ENCODE measurements at regions of chr20 and their contacts with region 1.

Region 1: GRCh38 chr20:53623454-53624211 is 30.0 kb upstream of the ZNF217 start:
- DNase-seq: peak; percentile 80
- H3K4me3 Mint-ChIP-seq: peak overlapping the region; percentile 57
- H3K27ac Mint-ChIP-seq: peak overlapping the region; percentile 98
- H3K4me1 Mint-ChIP-seq: peaks cover 18% of the 10 kb centered on the region
- H3K27me3 Mint-ChIP-seq: no peaks in the 10 kb centered on the region
- CTCF ChIP-seq: no peak

Region 2: DNA sequence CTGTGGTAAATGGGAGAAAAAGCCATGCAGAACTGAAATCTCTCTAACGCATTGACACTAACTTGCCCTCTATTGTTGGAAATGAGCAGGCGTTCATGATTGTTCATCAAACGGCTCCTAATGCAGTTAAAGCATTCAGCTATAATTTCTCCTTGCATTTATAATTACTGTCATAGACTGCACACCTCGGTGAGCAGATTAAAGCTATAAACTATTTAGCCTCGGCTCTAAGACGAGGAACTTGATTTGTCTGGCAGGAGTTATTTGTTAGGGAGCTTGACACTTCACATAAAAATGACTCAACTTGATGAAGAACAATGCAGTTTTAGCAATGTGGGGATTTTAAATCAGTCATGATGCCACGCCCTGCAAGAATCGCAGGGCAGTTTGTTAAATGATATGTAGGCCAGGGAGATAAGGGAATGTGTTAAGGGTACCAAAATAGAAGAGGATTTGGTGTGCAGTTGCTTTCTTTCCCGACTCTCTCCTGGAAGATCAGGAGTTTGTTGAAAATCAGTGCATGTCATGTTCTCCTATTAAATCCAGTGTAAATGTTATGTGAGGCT is 361.3 kb before region 1 on chr20:
- CTCF ChIA-PET with region 1: no interaction called
- POLR2A ChIA-PET with region 1: no interaction called
- intact Hi-C with region 1: no loop called
- DNase-seq: no peak
- H3K4me3 Mint-ChIP-seq: no peak overlapping the region
- H3K27ac Mint-ChIP-seq: no peak overlapping the region
- H3K4me1 Mint-ChIP-seq: no peaks in the 10 kb centered on the region
- H3K27me3 Mint-ChIP-seq: no peaks in the 10 kb centered on the region
- CTCF ChIP-seq: no peak

Region 3: GRCh38 chr20:53594068-53595017 is 29.3 kb before region 1 on chr20:
- CTCF ChIA-PET with region 1: interaction called, 5 read pairs
- POLR2A ChIA-PET with region 1: interaction called, 350 read pairs
- intact Hi-C with region 1: loop called (anchors 1 kb)
- DNase-seq: peak; percentile 90
- H3K4me3 Mint-ChIP-seq: peak overlapping the region; percentile 82
- H3K27ac Mint-ChIP-seq: peak overlapping the region; percentile 93
- H3K4me1 Mint-ChIP-seq: peaks cover 29% of the 10 kb centered on the region
- H3K27me3 Mint-ChIP-seq: no peaks in the 10 kb centered on the region
- CTCF ChIP-seq: peak; percentile 23

Region 4: DNA sequence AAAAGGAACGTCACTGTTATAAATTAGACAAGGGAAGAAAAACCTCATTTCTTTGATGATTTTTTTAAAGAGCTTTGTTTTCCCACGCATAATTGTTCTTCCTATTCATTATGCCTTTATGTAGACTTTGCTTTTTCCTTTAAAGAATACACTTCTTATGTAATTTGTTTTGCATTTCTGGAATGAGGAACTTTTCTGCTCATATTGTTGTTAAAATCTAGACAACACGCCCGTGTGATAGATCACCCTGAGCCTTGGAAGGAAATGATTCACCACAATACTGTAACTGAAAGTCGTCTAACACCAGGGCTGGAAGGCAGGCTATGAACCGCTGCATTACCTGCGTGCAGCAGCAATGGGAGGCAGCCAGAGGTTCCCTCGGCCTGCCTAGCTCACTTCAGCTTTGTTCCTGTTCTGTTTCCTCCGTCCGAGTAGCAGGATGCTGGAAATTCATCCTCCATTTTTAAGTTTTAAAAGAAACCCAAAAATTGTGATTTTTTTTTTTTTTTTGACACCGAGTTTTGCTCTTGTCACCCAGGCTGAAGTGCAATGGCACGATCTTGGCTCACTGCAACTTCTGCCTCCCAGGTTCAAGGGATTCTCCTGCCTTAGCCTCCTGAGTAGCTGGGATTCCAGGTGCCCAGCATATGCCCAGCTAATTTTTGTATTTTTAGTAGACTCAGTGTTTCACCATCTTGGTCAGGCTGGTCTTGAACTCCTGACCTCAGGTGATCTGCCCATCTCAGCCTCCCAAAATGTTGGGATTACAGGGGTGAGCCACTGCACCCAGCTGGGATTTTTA is 19.6 kb after region 1 on chr20:
- CTCF ChIA-PET with region 1: interaction called, 13 read pairs
- POLR2A ChIA-PET with region 1: interaction called, 78 read pairs
- intact Hi-C with region 1: no loop called
- DNase-seq: peak; percentile 79
- H3K4me3 Mint-ChIP-seq: peak overlapping the region; percentile 51
- H3K27ac Mint-ChIP-seq: peak overlapping the region; percentile 97
- H3K4me1 Mint-ChIP-seq: peaks cover 12% of the 10 kb centered on the region
- H3K27me3 Mint-ChIP-seq: no peaks in the 10 kb centered on the region
- CTCF ChIP-seq: no peak

Region 5: DNA sequence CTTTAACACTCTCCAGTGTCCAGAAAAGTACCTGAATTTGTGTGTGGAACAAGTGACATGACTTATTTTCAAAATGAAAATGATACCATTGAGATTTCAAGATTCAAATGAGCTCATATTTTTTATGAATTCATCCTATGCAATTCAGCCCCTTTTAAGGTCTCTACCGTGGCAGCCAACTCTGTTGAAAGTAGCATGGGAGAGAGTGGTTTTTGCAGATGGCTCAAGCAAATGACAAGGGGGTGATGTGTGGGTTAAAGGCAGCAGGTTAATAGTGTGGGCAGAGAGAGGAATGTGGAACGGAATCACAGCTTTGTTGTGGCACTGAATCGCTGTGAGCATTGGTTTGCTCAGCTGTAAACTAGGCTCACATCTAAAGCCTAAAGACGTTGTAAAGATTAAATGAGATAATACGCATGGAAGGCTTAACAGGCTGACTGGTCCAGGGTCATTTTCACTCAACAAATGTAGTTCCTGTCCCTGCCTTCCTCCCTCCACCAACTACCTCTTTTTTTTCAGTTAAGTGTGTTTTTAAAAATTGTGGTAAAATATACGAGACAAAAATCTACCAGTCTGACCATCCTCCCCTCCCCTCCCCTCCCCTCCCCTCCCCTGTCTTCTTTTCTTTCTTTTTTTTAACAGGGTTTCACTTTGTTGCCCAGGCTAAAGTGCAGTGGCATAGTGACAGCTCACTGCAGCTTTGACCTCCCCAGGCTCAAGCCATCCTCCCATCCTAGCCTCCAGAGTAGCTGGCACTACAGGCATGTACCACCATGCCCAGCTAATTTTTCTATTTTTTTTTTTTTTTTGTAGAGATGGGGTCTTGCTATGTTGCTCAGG is 84.7 kb after region 1 on chr20:
- CTCF ChIA-PET with region 1: no interaction called
- POLR2A ChIA-PET with region 1: no interaction called
- intact Hi-C with region 1: no loop called
- DNase-seq: no peak
- H3K4me3 Mint-ChIP-seq: no peak overlapping the region
- H3K27ac Mint-ChIP-seq: no peak overlapping the region
- H3K4me1 Mint-ChIP-seq: no peaks in the 10 kb centered on the region
- H3K27me3 Mint-ChIP-seq: no peaks in the 10 kb centered on the region
- CTCF ChIP-seq: no peak

Region 6: DNA sequence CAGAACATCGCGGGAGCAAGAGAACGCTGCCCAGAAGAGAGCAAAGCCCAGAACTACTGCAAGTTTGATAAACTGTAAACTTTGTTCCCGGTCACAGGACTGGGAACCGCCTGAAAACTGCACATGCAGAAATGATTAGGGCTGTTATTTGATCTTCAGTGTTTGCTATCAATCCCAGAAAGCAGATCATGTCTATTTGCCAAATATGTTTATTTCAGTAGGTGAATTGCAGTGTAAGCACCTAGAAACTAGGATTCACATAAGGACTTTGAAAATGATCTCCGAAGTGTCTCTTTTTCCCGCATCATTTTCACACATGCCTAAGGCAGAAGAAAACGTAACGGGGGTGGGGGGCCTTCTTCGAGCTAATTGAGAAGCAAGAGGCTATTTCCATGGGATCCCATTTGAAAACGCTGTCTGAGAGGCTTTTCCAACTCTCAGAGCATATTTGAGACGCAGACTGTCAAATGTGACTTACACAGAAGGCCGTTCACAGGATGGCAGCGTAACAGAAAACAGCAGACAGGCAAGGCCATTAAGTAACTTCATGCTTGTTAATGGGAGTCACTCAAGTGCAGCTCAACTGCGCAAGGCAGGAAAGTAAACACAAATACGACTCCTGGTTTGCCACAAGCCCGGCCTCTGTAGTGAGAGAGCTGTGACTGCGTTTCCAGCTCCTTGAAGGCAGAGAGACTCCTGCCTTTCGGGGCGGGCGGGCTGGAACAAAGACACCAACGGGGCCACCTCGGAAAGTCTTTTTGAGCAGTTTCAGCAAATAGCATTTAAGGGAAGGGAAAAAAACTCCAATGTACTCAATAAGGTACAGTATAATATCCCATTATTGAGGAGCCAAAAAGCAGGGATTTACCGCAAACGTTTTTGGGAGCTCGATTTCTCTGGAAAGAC is 114.7 kb after region 1 on chr20:
- CTCF ChIA-PET with region 1: interaction called, 4 read pairs
- POLR2A ChIA-PET with region 1: interaction called, 30 read pairs
- intact Hi-C with region 1: no loop called
- DNase-seq: no peak
- H3K4me3 Mint-ChIP-seq: no peak overlapping the region
- H3K27ac Mint-ChIP-seq: no peak overlapping the region
- H3K4me1 Mint-ChIP-seq: peaks cover 32% of the 10 kb centered on the region
- H3K27me3 Mint-ChIP-seq: no peaks in the 10 kb centered on the region
- CTCF ChIP-seq: no peak

Region 7: GRCh38 chr20:53828682-53829254 is 205.1 kb after region 1 on chr20:
- CTCF ChIA-PET with region 1: interaction called, 17 read pairs
- POLR2A ChIA-PET with region 1: interaction called, 82 read pairs
- intact Hi-C with region 1: loop called (anchors 2 kb)
- DNase-seq: peak; percentile 84
- H3K4me3 Mint-ChIP-seq: peak overlapping the region; percentile 66
- H3K27ac Mint-ChIP-seq: peak overlapping the region; percentile 98
- H3K4me1 Mint-ChIP-seq: peaks cover 37% of the 10 kb centered on the region
- H3K27me3 Mint-ChIP-seq: no peaks in the 10 kb centered on the region
- CTCF ChIP-seq: no peak

Region 8: GRCh38 chr20:53905019-53905847 is 281.6 kb after region 1 on chr20:
- CTCF ChIA-PET with region 1: interaction called, 8 read pairs
- POLR2A ChIA-PET with region 1: interaction called, 40 read pairs
- intact Hi-C with region 1: loop called (anchors 2 kb)
- DNase-seq: no peak
- H3K4me3 Mint-ChIP-seq: no peak overlapping the region
- H3K27ac Mint-ChIP-seq: peak overlapping the region; percentile 93
- H3K4me1 Mint-ChIP-seq: peaks cover 52% of the 10 kb centered on the region
- H3K27me3 Mint-ChIP-seq: no peaks in the 10 kb centered on the region
- CTCF ChIP-seq: no peak